ENCODE measurements at regions of chr1 and their contacts with region 1.

Region 1: GRCh38 chr1:162035241-162035640 is 11.6 kb upstream of the OLFML2B start:
- DNase-seq: peak; percentile 29
- H3K4me3 Mint-ChIP-seq: no peak overlapping the region
- H3K27ac Mint-ChIP-seq: no peak overlapping the region
- H3K4me1 Mint-ChIP-seq: peaks cover 4% of the 10 kb centered on the region
- H3K27me3 Mint-ChIP-seq: peaks cover 12% of the 10 kb centered on the region

Region 2: DNA sequence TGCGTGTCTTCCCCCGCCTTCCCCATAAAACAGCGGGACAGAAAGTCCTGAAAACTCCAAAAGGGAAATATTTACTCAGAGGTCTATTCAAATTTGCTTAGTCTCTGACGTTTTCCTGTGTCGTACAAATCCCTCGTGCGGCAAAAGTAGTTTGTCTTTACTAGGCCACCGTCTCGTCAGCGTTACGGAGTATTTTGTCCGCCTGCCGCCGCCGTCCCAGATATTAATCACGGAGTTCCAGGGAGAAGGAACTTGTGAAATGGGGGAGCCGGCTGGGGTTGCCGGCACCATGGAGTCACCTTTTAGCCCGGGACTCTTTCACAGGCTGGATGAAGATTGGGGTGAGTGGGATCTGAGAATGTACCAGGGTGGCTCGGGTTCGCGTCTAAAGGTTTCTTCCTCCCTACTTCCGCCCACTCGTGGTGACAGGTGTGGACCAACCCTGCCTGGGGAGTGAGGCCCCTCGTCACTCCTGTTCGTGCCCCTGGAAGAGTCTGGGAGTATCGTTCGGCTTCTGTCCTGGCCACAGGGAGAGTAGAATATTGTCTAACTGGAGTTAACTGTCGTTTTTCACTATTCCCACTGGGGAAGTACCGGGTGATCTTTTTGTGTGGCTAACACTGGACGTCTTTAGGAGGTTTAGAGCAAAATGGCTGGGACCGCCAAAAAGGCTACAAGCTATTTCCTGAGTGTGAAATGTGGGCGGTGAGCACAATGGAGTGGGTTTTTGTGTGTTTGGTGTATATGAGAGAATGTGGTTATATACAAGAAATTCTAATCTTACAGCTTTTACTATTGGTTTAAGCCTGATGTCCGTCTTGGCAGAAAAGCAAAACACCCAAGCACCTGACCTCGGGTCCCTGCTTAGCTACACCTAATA is 268.9 kb before region 1 on chr1 and contains the start of gene ATF6:
- CTCF ChIA-PET with region 1: interaction called, 14 read pairs
- POLR2A ChIA-PET with region 1: no interaction called
- intact Hi-C with region 1: loop called (anchors 2 kb)
- DNase-seq: peak; percentile 90
- H3K4me3 Mint-ChIP-seq: peak within 1 kb of the TSS; percentile 98
- H3K27ac Mint-ChIP-seq: peak within 1 kb of the TSS; percentile 93
- H3K4me1 Mint-ChIP-seq: peaks cover 51% of the 10 kb centered on the region
- H3K27me3 Mint-ChIP-seq: no peaks in the 10 kb centered on the region
- total RNA-seq, gene ATF6: 20.8 to 23.0 TPM

Measured in activated CD4-positive, alpha-beta memory T cell treated with anti-CD3 and anti-CD28 coated beads for 36 hours (primary cell).